Left ventricle myocardium superior (tissue), 1 donor: ENCODE measurements at regions of chr15 and their contacts with region 1.

Region 1: DNA sequence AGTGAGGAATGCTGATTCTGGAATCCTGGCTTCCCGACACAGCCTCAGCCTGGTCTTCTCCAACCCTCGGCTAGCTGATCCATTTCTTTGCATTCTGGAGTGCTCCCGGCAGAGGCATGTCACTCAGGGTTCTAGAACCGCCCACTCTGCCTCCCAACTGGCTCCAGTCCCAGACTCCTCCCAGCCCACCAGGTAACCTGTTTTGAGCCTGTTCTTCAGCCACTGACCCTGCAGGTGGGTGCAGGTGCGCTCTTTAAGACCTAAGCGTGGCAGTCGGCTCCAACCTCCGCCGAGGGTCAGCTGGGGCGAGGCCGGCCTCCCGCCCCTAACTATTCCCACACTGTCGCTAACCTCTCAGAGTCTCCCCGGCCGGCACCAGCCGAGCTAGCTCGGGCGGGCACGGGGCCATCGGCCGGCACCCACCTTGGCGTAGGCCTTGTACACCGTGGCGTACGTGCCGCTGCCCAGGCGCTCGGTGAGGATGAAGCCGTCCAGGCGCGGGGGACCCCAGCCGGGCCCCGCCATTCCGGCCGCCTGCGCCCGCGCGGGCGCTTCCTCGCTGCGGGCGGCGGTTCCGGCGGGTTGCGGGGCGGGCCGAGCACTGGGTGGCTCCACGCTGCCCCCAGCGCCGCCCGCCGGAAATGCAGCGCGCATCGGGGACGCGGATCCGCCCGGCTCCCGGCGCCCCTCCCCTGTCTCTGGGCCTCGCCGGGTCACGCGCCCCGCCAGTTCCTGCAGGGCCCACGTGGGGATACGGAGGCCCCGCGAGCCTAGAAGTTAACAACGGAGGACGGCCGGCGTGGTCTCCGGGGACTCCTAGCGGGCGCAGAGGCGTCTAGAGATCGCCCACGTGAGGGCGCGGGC is at the start of gene ULK3:
- DNase-seq: peak; percentile 96
- ATAC-seq: peak; percentile 91
- total RNA-seq, gene ULK3: 47.5 TPM

Region 2: DNA sequence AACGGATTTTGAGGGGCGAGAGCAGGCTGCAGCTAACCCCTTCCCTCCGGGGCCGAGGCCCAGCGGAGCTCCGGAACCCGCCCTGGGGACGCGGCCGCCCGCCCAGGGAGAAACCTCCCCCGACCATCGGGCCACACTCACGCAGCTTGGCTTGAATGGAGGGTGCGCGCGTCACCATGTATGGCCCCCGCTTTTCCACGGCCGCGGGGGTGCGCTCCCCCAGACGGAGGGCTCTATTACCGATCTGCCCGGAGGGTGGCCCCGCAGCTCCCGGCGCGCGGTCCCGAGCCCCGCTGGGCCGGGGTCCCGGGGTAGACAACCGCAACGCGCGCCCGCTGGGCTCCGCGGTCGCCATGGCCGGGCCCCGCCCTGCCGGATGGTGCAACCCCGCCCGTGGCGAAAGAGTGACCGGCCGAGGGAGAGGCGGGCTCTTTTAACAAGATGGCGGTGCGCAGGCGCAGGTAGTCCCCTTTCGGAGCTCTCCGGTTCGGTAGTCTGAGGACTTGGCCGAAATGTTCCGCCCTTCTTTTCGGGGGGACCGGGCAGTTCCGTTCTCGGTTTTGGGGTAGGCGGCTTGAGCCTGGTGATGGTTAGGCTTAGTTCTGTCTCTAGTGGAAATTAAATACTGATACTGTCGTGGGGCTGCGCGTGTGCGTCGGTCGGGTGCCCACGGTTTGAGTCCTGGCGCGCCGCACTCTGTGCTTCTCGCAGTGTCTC is 63.8 kb after region 1 on chr15 and contains the start of gene FAM219B:
- intact Hi-C with region 1: loop called (anchors 10 kb)
- DNase-seq: peak; percentile 97
- ATAC-seq: peak; percentile 94
- total RNA-seq, gene FAM219B: 110 TPM

Region 3: DNA sequence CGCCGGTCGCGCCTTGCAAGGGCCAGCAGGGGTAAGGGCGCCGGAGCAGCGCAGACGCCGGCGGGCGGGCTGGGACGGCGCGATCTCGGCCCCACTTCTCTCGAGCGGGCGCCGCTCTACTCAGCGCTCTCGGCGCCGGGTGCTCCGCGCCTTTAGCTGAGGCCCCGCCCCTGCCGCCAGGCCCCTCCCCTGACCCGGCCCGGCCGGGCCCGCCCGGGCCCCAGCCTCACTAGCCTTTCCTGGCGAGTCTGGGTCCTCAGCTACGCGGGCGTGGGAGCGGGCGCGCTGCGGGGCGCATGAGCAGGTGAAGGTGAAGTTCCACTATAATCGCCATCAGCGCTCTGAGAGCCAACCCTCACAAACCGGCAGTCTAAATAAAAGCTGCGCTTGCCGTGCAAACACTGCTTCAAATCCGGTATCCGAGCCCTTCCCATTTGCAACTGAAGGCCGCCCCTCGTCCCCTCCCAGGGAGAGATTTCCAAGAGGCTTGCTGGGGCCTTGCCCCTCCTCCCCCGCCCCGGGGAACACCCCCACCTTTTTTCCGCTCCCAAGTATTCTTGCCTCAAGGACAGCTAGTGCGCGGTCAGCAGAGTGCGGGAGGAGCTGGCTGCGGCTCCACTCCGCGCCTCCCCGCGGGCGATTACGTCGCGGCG is 114.0 kb after region 1 on chr15 and contains the start of gene RPP25:
- intact Hi-C with region 1: no loop called
- DNase-seq: peak; percentile 89
- ATAC-seq: peak; percentile 91
- total RNA-seq, gene RPP25: 2.3 TPM

Region 4: DNA sequence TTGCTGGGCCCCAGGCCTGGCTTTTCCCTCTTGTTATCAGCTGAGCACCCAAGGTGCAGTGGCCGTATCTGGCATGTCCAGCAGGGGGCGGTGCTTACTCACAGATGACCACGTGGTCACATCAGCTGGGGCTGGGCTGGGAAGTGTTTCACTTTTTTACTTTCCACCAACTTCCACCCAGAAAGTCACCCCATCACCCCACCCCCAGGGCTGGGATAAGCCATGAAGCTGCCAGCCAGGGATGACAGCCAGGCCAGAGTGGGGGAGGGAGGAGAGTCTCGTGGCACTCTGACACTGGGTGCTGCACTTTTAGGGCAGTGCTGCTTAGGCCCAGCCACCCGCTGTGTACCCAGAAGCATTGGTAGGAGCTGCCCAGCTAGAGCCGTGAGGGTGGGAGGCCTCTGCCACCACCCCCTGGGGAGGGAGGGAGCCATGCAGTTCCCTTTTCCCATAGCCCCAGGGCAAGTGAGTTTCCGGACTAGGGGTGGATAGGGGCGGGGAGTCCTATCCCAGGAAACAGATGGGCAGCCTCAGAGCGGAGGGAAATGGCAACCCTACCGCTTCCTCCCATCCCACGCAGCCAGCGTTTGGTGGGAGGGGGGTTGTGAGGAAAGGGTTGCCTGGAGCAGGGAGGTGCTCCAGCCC is 186.7 kb after region 1 on chr15:
- intact Hi-C with region 1: no loop called
- DNase-seq: peak; percentile 96
- ATAC-seq: peak; percentile 89